Activated naive CD4-positive, alpha-beta T cell treated with anti-CD3 and anti-CD28 coated beads, Interleukin-2, amount 10 ng/mL, durations not matched to agents 7 days and 5 days (primary cell): ENCODE measurements at regions of chr4 and their contacts with region 1.

Region 1: GRCh38 chr4:40736910-40737309 is 12.8 kb upstream of the NSUN7 start:
- DNase-seq: no peak
- H3K4me3 Mint-ChIP-seq: no peak overlapping the region
- H3K27ac Mint-ChIP-seq: no peak overlapping the region
- H3K4me1 Mint-ChIP-seq: peaks cover 16% of the 10 kb centered on the region
- H3K27me3 Mint-ChIP-seq: peaks cover 19% of the 10 kb centered on the region

Region 2: DNA sequence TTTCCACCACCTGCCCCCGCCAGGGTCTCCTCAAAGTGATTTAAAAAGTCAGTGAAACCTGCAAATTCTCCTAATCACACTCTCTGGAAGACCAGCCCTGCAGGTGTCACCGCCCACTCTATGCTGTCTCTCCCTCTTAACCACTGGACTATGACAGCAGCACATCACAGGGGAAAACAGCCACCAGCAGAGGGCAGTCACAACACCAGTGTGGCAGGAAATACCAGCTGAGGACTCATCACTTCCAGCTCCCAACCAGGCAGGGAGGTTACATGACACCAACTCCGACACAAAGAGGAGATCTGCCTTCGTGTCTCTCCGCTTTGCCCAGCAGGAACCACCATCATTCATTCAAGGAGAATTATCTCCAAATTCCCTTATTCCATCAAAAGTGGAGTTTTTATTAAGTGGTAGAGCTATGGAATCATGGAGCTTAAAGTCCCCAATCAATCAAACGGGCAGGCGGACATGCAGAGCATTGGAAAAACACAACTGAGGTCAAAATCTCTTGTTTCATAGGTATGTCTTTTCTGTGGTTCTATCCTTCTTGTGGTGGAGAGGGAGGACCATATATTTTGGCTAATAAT is 104.2 kb after region 1 on chr4:
- CTCF ChIA-PET with region 1: interaction called, 117 read pairs
- DNase-seq: peak; percentile 85
- H3K4me3 Mint-ChIP-seq: no peak overlapping the region
- H3K27ac Mint-ChIP-seq: no peak overlapping the region
- H3K4me1 Mint-ChIP-seq: no peaks in the 10 kb centered on the region
- H3K27me3 Mint-ChIP-seq: peaks cover 11% of the 10 kb centered on the region